Mammary epithelial cell (primary cell): ENCODE measurements at regions of chr22 and their contacts with region 1.

Region 1: DNA sequence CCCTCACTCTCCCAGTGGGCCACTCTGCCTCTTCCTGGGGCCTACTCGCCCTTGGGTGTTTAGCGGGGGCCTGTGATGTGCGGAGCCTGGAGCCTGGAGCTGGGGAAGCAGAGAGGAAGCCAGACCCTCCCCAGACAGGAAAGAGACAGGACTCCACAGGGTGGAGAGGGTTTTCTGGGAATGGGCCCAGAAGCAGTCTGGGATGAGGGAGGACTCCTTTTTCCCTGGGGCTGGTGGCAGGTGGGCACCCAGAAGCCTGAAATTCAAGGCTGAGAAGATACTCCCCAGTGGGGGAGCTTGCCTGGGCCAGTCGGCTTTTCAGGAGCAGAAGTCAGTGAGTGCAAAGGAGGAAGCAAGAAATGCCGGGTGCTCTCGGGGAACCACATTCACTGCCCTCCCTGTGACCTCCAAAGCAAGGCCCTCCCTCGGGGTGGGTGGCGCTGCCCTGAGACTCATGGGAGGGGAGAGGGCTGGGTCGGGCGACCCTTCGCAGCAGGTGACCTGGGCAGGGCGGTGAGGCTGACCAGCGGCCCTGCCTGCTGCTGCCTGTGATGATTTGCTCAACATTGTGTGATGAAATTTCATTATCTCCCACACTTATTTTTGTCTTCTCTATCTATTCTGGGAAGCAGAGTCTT is 1377.4 kb downstream of the BRD1 start:
- DNase-seq: no peak
- H3K4me3 ChIP-seq: no peak overlapping the region
- H3K27ac ChIP-seq: no peak overlapping the region
- H3K4me1 ChIP-seq: no peaks in the 10 kb centered on the region
- H3K27me3 ChIP-seq: no peaks in the 10 kb centered on the region
- CTCF ChIP-seq: no peak

Region 2: GRCh38 chr22:48416586-48417224 is 33.6 kb before region 1 on chr22:
- CTCF ChIA-PET with region 1: no interaction called
- dilution Hi-C with region 1: loop called (anchors 5 kb)
- in situ Hi-C with region 1: no loop called
- intact Hi-C with region 1: no loop called
- DNase-seq: no peak
- H3K4me3 ChIP-seq: no peak overlapping the region
- H3K27ac ChIP-seq: no peak overlapping the region
- H3K4me1 ChIP-seq: no peaks in the 10 kb centered on the region
- H3K27me3 ChIP-seq: no peaks in the 10 kb centered on the region
- CTCF ChIP-seq: no peak